A549 (cell line): ENCODE measurements at regions of chr7 and their contacts with region 1.

Region 1: DNA sequence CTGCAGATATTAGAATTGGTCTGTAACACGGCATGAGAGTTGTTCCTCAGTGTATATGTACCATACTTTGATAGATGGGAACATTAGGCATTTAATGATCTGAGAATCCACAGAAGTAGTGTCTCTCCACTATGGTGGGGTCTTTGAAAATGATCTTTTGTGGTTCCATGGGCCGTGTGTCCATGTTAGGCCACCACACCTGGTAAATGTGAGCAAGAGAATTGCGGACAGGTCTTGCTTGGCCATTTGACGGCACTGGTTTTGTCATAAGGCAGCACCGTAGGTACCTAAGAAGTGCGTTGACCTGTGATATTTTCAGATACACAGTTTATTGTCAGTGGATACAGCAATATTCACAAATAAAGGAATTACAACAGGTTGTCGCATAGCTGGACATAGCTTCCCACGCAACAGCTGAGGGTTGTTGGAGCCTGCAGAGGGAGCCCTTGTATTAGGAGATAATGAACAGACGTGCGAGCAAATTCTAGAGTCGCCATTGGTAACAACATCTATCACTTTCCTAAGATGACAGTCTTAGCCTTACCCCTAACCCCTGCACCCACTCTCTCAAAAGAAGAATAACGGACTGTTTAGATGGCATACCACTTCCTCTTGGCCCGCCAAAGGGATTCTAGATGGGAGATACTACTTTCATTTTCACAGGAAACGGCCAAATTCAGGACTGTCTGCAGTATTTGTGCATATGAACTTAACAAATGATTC is 111.4 kb downstream of the COL28A1 start:
- DNase-seq: peak; percentile 54 to 74
- ATAC-seq: peak; percentile 98 to 99
- H3K4me3 ChIP-seq: peak overlapping the region; percentile 40
- H3K27ac ChIP-seq: peak overlapping the region; percentile 46 to 66; a peak in 5 of 6 replicates
- H3K4me1 ChIP-seq: no peaks in the 10 kb centered on the region
- CTCF ChIP-seq: peak; percentile 97
- EP300 ChIP-seq: no peak
- POLR2A ChIP-seq: no peak
- RAD21 ChIP-seq: peak; percentile 99

Region 2: DNA sequence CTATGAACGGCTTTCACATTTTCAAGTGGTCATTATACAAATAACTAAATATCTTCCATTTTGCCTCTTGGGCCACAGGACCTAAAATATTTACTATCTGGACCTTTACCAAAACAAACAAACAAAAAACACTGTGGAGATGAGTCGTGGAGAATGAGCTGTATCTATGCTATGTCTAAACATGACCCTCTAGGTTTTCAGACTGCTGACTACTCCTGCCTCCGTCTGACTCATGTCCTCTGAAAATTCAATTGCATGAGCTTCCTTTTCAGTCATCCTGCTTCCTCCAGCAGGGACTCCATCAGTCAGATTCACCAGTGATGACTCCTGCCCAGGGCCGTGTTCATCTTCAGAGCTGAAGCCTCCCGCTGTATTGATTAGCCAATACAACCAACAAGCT is 14.5 kb after region 1 on chr7:
- CTCF ChIA-PET with region 1: interaction called, 55 read pairs
- POLR2A ChIA-PET with region 1: no interaction called
- DNase-seq: peak; percentile 78 to 94
- ATAC-seq: peak; percentile 100
- H3K4me3 ChIP-seq: no peak overlapping the region
- H3K27ac ChIP-seq: peak overlapping the region; percentile 71 to 85
- H3K4me1 ChIP-seq: peaks cover 27% of the 10 kb centered on the region
- CTCF ChIP-seq: no peak
- EP300 ChIP-seq: peak; percentile 75 to 76; a peak in 2 of 5 replicates
- POLR2A ChIP-seq: no peak
- RAD21 ChIP-seq: peak; percentile 19 to 48; a peak in 4 of 5 replicates

Region 3: GRCh38 chr7:7529328-7529727 is 105.0 kb after region 1 on chr7:
- CTCF ChIA-PET with region 1: interaction called, 54 read pairs
- POLR2A ChIA-PET with region 1: no interaction called
- DNase-seq: peak in 1 of 2 experiments; percentile 57
- ATAC-seq: peak; percentile 59 to 74; a peak in 4 of 6 replicates
- H3K4me3 ChIP-seq: no peak overlapping the region
- H3K27ac ChIP-seq: peak overlapping the region; percentile 40 to 50; a peak in 5 of 6 replicates
- H3K4me1 ChIP-seq: peaks cover 15% of the 10 kb centered on the region
- CTCF ChIP-seq: no peak
- EP300 ChIP-seq: no peak
- POLR2A ChIP-seq: no peak
- RAD21 ChIP-seq: 0 out of 5 replicates have a peak, but pooled peaks of 1 of the 2 experiments have one; percentile 6

Region 4: GRCh38 chr7:7542251-7542835 is 118.0 kb after region 1 on chr7:
- CTCF ChIA-PET with region 1: interaction called, 141 read pairs
- POLR2A ChIA-PET with region 1: no interaction called
- DNase-seq: no peak
- ATAC-seq: no peak
- H3K4me3 ChIP-seq: no peak overlapping the region
- H3K27ac ChIP-seq: 0 out of 6 replicates have a peak overlapping the region, but pooled peaks of 1 of the 2 experiments have one; percentile 26
- H3K4me1 ChIP-seq: peaks cover 12% of the 10 kb centered on the region
- CTCF ChIP-seq: no peak
- EP300 ChIP-seq: no peak
- POLR2A ChIP-seq: no peak
- RAD21 ChIP-seq: no peak

Region 5: DNA sequence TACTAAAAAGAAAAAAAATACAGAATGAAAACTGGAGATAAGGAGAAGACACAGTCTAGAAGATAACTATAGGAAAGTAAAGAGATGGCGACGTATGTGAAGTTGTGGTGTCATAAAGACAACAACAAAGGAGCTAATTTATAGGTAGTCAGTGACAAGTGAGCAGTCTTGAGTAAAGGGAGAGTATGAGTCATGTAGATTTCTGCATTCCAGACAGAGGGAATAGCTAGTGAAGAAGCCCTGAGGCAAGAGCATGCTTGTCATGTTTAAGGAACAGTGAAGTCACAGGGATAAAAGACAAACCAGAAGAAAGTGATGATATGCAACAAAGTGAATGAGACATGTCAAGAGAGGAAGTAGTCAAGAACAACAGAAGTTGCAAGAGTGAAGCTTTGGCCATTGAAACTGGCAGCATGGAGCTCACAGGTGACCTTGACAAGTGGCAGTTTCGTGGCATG is 140.0 kb after region 1 on chr7:
- CTCF ChIA-PET with region 1: interaction called, 10 read pairs
- POLR2A ChIA-PET with region 1: no interaction called
- DNase-seq: peak; percentile 54 to 81
- ATAC-seq: peak; percentile 29 to 45
- H3K4me3 ChIP-seq: no peak overlapping the region
- H3K27ac ChIP-seq: peak overlapping the region in 1 of 2 experiments; percentile 59; a peak in 4 of 6 replicates
- H3K4me1 ChIP-seq: peaks cover 37% of the 10 kb centered on the region
- CTCF ChIP-seq: no peak
- EP300 ChIP-seq: no peak; a peak in 1 of 5 replicates
- POLR2A ChIP-seq: no peak
- RAD21 ChIP-seq: no peak

Region 6: GRCh38 chr7:7640221-7641128 is 216.2 kb after region 1 on chr7 and contains the start of gene UMAD1:
- CTCF ChIA-PET with region 1: no interaction called
- POLR2A ChIA-PET with region 1: no interaction called
- DNase-seq: peak; percentile 93 to 99
- ATAC-seq: peak; percentile 98 to 99
- H3K4me3 ChIP-seq: peak within 1 kb of the TSS; percentile 89
- H3K27ac ChIP-seq: peak within 1 kb of the TSS; percentile 81 to 91
- H3K4me1 ChIP-seq: peaks cover 17% of the 10 kb centered on the region; the same call in 2 of the 3 replicates
- CTCF ChIP-seq: no peak
- EP300 ChIP-seq: no peak
- POLR2A ChIP-seq: peak; percentile 85
- RAD21 ChIP-seq: no peak
- polyA plus RNA-seq, gene UMAD1: 36.2 and 46.4 TPM in 2 replicates